PC-9 (cell line): ENCODE measurements at regions of chr2 and their contacts with region 1.

Region 1: DNA sequence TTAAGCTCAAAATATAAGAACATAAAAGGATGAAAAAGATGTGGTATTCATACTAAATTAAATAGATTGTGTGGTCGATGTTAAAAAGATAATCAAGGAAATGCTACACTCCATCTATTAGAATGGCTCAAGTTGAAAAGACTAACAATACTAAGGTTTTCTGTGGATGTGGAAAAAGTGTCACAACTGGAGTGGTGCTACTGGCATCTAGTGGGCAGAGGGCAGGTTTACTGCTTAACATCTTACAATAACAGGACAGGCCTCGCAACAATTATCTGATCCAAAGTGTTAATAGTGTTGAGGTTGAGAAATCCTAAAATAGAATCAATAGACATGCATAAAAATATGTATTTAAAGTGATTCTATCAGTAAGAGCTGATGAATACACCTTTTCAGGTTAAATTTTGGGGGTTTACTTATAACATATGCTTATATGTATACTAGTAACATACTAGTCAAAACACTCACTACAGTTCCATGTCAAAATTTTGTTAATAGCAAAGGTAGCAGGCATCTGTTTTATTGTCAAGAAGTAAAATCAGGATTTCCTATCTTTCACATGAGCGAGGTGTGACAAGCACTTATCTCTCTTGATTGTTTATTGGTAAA is 91.5 kb upstream of the TMEFF2 start:
- DNase-seq: no peak
- H3K4me3 ChIP-seq: no peak overlapping the region
- H3K27ac ChIP-seq: no peak overlapping the region
- H3K4me1 ChIP-seq: no peaks in the 10 kb centered on the region
- H3K27me3 ChIP-seq: no peaks in the 10 kb centered on the region
- CTCF ChIP-seq: peak; percentile 55

Region 2: GRCh38 chr2:191811807-191812602 is 474.2 kb before region 1 on chr2:
- CTCF ChIA-PET with region 1: no interaction called
- POLR2A ChIA-PET with region 1: no interaction called
- intact Hi-C with region 1: loop called (anchors 5 kb)
- DNase-seq: peak; percentile 39 to 43
- H3K4me3 ChIP-seq: no peak overlapping the region
- H3K27ac ChIP-seq: no peak overlapping the region
- H3K4me1 ChIP-seq: no peaks in the 10 kb centered on the region
- H3K27me3 ChIP-seq: no peaks in the 10 kb centered on the region
- CTCF ChIP-seq: peak; percentile 80

Region 3: GRCh38 chr2:194182888-194183287 is 1896.7 kb after region 1 on chr2:
- CTCF ChIA-PET with region 1: no interaction called
- POLR2A ChIA-PET with region 1: interaction called, 12 read pairs
- intact Hi-C with region 1: no loop called
- DNase-seq: no peak
- H3K4me3 ChIP-seq: no peak overlapping the region
- H3K27ac ChIP-seq: no peak overlapping the region
- H3K4me1 ChIP-seq: no peaks in the 10 kb centered on the region
- H3K27me3 ChIP-seq: no peaks in the 10 kb centered on the region
- CTCF ChIP-seq: no peak